WTC11 (cell line): ENCODE measurements at regions of chr10 and their contacts with region 1.

Region 1: GRCh38 chr10:48614481-48615390 is 9.9 kb upstream of the ARHGAP22 start:
- DNase-seq: no peak
- ATAC-seq: peak; percentile 65
- H3K4me3 Mint-ChIP-seq: no peak overlapping the region
- H3K27ac Mint-ChIP-seq: no peak overlapping the region
- H3K4me1 Mint-ChIP-seq: no peaks in the 10 kb centered on the region
- H3K27me3 Mint-ChIP-seq: peaks cover 6% of the 10 kb centered on the region
- CTCF ChIP-seq: no peak

Region 2: GRCh38 chr10:48594803-48595538 is 19.8 kb before region 1 on chr10:
- CTCF ChIA-PET with region 1: interaction called, 13 read pairs
- POLR2A ChIA-PET with region 1: no interaction called
- DNase-seq: peak; percentile 40
- ATAC-seq: peak; percentile 54
- H3K4me3 Mint-ChIP-seq: peak overlapping the region; percentile 11; the same call in 1 of the 2 replicates
- H3K27ac Mint-ChIP-seq: no peak overlapping the region; the same call in 1 of the 2 replicates
- H3K4me1 Mint-ChIP-seq: peaks cover 23% of the 10 kb centered on the region
- H3K27me3 Mint-ChIP-seq: peaks cover 3% of the 10 kb centered on the region
- CTCF ChIP-seq: no peak

Region 3: GRCh38 chr10:48678041-48678440 is 63.3 kb after region 1 on chr10:
- CTCF ChIA-PET with region 1: no interaction called
- POLR2A ChIA-PET with region 1: no interaction called
- DNase-seq: no peak
- ATAC-seq: no peak
- H3K4me3 Mint-ChIP-seq: no peak overlapping the region
- H3K27ac Mint-ChIP-seq: no peak overlapping the region
- H3K4me1 Mint-ChIP-seq: no peaks in the 10 kb centered on the region
- H3K27me3 Mint-ChIP-seq: peaks cover 3% of the 10 kb centered on the region
- CTCF ChIP-seq: no peak

Region 4: DNA sequence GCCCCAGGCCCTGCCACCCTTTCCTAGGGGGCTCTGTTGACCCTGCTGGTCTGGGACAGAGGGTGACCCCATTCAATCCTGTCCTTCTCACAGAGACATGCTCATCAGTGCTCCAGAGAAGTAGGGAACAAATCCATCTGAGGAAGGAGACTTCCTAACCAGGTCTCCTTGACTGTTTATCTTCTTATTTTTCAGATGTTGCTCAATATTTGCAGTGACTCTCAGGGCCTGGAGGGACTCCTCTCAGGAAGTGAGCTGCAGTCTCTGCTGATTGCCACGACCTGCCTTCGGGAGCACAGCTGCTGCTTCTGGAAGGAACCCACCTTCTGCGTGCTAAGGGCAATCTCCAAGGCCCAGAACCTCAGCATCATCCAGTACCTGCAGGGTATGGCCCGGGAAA is 111.0 kb after region 1 on chr10:
- CTCF ChIA-PET with region 1: no interaction called
- POLR2A ChIA-PET with region 1: no interaction called
- DNase-seq: no peak
- ATAC-seq: no peak
- H3K4me3 Mint-ChIP-seq: no peak overlapping the region
- H3K27ac Mint-ChIP-seq: no peak overlapping the region
- H3K4me1 Mint-ChIP-seq: no peaks in the 10 kb centered on the region
- H3K27me3 Mint-ChIP-seq: no peaks in the 10 kb centered on the region
- CTCF ChIP-seq: no peak